ENCODE measurements at regions of chr11 and their contacts with region 1.

Region 1: GRCh38 chr11:27158722-27159679 is 118.4 kb downstream of the BBOX1 start:
- DNase-seq: no peak
- ATAC-seq: peak; percentile 91

Region 2: DNA sequence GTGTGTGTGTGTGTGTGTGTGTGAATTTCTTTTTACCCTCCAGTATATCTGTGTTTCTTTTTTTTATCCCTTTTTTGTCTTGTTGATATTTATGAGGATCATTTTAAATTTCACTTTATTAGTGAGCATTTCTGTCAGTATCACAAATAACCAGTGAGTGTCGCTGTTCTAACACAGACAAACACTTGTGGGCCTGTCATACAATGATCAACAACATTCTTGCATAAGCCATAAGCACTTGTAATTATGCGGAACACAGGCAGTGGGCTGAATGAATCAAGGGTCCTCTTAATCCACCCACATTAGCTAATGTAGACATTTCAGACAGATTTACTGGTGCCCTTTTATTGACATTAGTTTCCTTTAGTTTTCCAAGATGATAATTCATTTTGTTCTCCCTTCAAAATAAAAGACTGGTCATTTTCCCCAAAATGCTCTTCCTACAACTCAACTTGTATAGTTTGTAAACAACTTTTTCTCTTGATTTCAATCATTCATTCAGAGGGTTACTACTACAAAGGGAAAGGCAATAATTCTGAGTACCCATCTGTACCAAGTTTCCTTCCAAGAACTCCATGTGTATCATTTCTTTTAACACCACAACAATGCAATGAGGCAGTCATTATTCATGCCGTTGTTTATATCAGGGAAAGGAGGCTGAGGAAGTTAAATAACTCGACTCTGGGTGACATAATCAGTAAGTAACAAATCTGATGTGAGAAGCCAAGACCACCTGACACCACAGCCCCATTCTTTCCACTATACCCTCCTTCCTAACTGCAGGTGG is 861.6 kb before region 1 on chr11:
- intact Hi-C with region 1: loop called (anchors 10 kb)
- DNase-seq: no peak
- ATAC-seq: peak; percentile 69

Region 3: GRCh38 chr11:26753723-26754504 is 405.1 kb before region 1 on chr11:
- intact Hi-C with region 1: loop called (anchors 2 kb)
- DNase-seq: peak; percentile 40
- ATAC-seq: peak; percentile 86

Measured in Right ventricle myocardium superior (tissue), 1 donor.